Panc1 (cell line): ENCODE measurements at regions of chr11 and their contacts with region 1.

Region 1: GRCh38 chr11:125902927-125903710 is at the start of gene PUS3:
- DNase-seq: no peak
- ATAC-seq: peak; percentile 92
- H3K4me3 ChIP-seq: peak within 1 kb of the TSS; percentile 87 to 97
- H3K27ac ChIP-seq: peak within 1 kb of the TSS; percentile 99
- H3K4me1 ChIP-seq: 0 out of 2 replicates have a peak, but pooled peaks cover 7% of the 10 kb centered on the region
- H3K27me3 ChIP-seq: peaks cover 16% of the 10 kb centered on the region
- CTCF ChIP-seq: no peak
- total RNA-seq, gene PUS3: 15.1 TPM

Region 2: GRCh38 chr11:126053415-126054286 is 150.5 kb after region 1 on chr11:
- CTCF ChIA-PET with region 1: no interaction called
- POLR2A ChIA-PET with region 1: interaction called, 11 read pairs
- in situ Hi-C with region 1: no loop called
- intact Hi-C with region 1: no loop called
- DNase-seq: no peak
- ATAC-seq: no peak
- H3K4me3 ChIP-seq: no peak overlapping the region
- H3K27ac ChIP-seq: no peak overlapping the region
- H3K4me1 ChIP-seq: no peaks in the 10 kb centered on the region
- H3K27me3 ChIP-seq: no peaks in the 10 kb centered on the region
- CTCF ChIP-seq: no peak

Region 3: GRCh38 chr11:126080161-126080941 is 177.2 kb after region 1 on chr11:
- CTCF ChIA-PET with region 1: no interaction called
- POLR2A ChIA-PET with region 1: no interaction called
- in situ Hi-C with region 1: loop called (anchors 25 kb)
- intact Hi-C with region 1: no loop called
- DNase-seq: no peak
- ATAC-seq: peak; percentile 67
- H3K4me3 ChIP-seq: no peak overlapping the region
- H3K27ac ChIP-seq: no peak overlapping the region
- H3K4me1 ChIP-seq: peaks cover 7% of the 10 kb centered on the region; the same call in 1 of the 2 replicates
- H3K27me3 ChIP-seq: no peaks in the 10 kb centered on the region
- CTCF ChIP-seq: no peak